Aorta (tissue), 5 donors: ENCODE measurements at regions of chr1 and their contacts with region 1.

Region 1: GRCh38 chr1:212990276-212990675 is 25.4 kb downstream of the ANGEL2 start:
- DNase-seq: no peak
- ATAC-seq: no peak
- H3K4me3 ChIP-seq: no peak overlapping the region
- H3K27ac ChIP-seq: no peak overlapping the region
- H3K4me1 ChIP-seq: no peaks in the 10 kb centered on the region
- H3K27me3 ChIP-seq: no peaks in the 10 kb centered on the region

Region 2: GRCh38 chr1:212814537-212815334 is 175.5 kb before region 1 on chr1:
- intact Hi-C with region 1: loop called (anchors 5 to 10 kb)
- DNase-seq: no peak
- ATAC-seq: no peak
- H3K4me3 ChIP-seq: no peak overlapping the region
- H3K27ac ChIP-seq: no peak overlapping the region
- H3K4me1 ChIP-seq: no peaks in the 10 kb centered on the region
- H3K27me3 ChIP-seq: no peaks in the 10 kb centered on the region